Activated CD4-positive, alpha-beta memory T cell treated with anti-CD3 and anti-CD28 coated beads for 36 hours (primary cell): ENCODE measurements at regions of chr1 and their contacts with region 1.

Region 1: GRCh38 chr1:100459358-100460114 is 78.4 kb upstream of the GPR88 start:
- DNase-seq: peak; percentile 88
- H3K4me3 Mint-ChIP-seq: peak overlapping the region; percentile 17
- H3K27ac Mint-ChIP-seq: peak overlapping the region; percentile 73
- H3K4me1 Mint-ChIP-seq: peaks cover 58% of the 10 kb centered on the region
- H3K27me3 Mint-ChIP-seq: no peaks in the 10 kb centered on the region

Region 2: GRCh38 chr1:99969729-99970621 is 489.6 kb before region 1 on chr1 and contains the start of gene SLC35A3:
- CTCF ChIA-PET with region 1: interaction called, 7 read pairs
- POLR2A ChIA-PET with region 1: no interaction called
- intact Hi-C with region 1: loop called (anchors 10 kb)
- DNase-seq: peak; percentile 88
- H3K4me3 Mint-ChIP-seq: peak within 1 kb of the TSS; percentile 100
- H3K27ac Mint-ChIP-seq: peak within 1 kb of the TSS; percentile 88
- H3K4me1 Mint-ChIP-seq: peaks cover 18% of the 10 kb centered on the region
- H3K27me3 Mint-ChIP-seq: no peaks in the 10 kb centered on the region
- total RNA-seq, gene SLC35A3: 16.5 to 18.3 TPM

Region 3: DNA sequence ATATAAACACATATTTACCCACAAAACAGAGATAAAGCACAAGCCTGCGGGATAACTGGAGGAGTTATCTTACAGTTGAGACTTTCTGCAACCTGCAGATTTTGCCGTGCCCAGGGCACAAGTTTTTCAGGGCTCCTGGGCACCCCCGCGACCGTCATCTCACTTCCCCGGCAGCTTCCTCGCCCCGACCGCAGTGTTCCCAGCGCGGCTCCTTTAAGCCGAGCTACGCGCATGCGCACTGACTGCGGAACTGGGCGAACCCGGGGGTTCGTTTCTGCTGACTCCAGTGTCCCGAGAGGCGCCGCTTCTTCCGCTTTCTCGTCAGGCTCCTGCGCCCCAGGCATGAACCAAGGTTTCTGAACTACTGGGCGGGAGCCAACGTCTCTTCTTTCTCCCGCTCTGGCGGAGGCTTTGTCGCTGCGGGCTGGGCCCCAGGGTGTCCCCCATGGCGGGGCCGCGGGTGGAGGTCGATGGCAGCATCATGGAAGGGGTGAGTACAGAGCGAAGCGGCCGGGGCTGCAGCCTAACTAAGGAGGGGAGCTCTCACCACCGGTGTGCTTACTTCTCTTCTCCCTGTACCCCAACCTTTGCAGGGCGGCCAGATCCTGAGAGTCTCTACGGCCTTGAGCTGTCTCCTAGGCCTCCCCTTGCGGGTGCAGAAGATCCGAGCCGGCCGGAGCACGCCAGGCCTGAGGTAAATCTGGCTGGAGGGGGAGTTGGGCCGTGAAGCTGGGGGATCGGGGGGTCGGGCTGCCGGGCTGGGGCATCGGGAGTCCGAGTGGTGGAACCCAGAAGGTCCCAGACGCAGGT is 193.4 kb before region 1 on chr1 and contains the start of gene RTCA:
- CTCF ChIA-PET with region 1: interaction called, 25 read pairs
- POLR2A ChIA-PET with region 1: interaction called, 9 read pairs
- intact Hi-C with region 1: loop called (anchors 1 kb)
- DNase-seq: peak; percentile 96
- H3K4me3 Mint-ChIP-seq: peak within 1 kb of the TSS; percentile 100
- H3K27ac Mint-ChIP-seq: peak within 1 kb of the TSS; percentile 97
- H3K4me1 Mint-ChIP-seq: peaks cover 40% of the 10 kb centered on the region
- H3K27me3 Mint-ChIP-seq: no peaks in the 10 kb centered on the region
- total RNA-seq, gene RTCA: 56.6 to 58.2 TPM

Region 4: DNA sequence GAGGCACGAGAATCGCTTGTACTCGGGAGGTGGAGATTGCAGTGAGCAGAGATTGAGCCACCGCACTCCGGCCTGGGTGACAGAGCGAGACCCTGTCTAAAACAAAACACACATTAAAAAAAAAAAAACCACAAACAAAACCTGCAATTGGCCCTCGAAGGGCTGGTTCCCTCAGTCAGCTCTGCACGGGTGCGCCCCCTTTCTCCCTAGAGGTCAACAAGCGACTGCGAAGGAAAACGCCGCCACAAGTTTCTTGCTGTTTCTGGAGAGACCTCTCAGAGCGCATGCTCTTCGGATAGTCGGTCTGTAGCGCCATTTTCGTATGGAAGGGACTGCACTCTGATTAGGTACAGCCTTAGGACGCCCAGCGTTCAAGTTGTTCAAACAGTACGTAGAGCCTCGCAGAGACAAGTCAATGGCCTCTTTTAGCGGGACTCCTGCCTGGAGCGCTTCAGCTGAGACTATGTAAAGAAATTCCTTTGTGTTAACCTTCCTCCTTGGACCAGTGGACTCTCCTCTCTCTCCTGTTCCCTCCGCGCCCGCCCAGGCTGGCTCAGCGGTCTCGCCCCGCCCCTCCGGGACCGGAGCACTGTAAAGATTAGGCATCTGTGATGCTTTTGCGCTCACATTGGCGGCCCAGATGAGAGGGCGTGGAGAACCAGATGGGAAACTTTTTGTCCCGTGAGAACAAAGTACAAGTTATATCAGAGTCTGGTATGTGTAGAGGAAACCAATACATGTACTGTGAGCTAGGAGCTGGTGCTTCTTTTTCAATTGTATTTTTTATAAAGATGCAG is 108.2 kb before region 1 on chr1:
- CTCF ChIA-PET with region 1: interaction called, 54 read pairs
- POLR2A ChIA-PET with region 1: interaction called, 11 read pairs
- intact Hi-C with region 1: loop called (anchors 2 kb)
- DNase-seq: peak; percentile 94
- H3K4me3 Mint-ChIP-seq: peak overlapping the region; percentile 98
- H3K27ac Mint-ChIP-seq: peak overlapping the region; percentile 97
- H3K4me1 Mint-ChIP-seq: peaks cover 30% of the 10 kb centered on the region
- H3K27me3 Mint-ChIP-seq: no peaks in the 10 kb centered on the region

Region 5: DNA sequence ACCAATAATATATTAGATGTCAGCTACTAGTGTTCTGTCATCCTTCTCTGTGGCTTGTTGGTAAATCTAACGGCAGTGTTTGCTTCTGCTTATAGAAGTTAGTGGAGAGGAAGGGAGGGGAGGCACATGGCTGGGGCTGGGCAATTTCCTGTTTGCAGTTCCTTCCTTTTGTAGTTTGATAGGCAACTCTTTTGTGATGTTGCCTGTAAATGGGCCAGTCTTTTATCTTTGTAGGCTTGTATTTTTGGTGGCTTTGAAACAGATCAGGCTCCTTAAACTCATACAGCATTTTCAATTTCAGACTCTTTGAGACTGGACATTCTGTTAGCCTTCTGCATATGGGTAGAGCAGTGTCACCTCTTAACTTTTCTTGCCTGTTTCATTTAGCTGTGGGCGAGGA is 59.1 kb before region 1 on chr1:
- CTCF ChIA-PET with region 1: interaction called, 14 read pairs
- POLR2A ChIA-PET with region 1: no interaction called
- intact Hi-C with region 1: no loop called
- DNase-seq: peak; percentile 67
- H3K4me3 Mint-ChIP-seq: peak overlapping the region; percentile 53
- H3K27ac Mint-ChIP-seq: peak overlapping the region; percentile 91
- H3K4me1 Mint-ChIP-seq: peaks cover 83% of the 10 kb centered on the region
- H3K27me3 Mint-ChIP-seq: no peaks in the 10 kb centered on the region

Region 6: GRCh38 chr1:100433563-100433962 is 26.0 kb before region 1 on chr1:
- CTCF ChIA-PET with region 1: interaction called, 13 read pairs
- POLR2A ChIA-PET with region 1: no interaction called
- intact Hi-C with region 1: no loop called
- DNase-seq: no peak
- H3K4me3 Mint-ChIP-seq: no peak overlapping the region
- H3K27ac Mint-ChIP-seq: peak overlapping the region; percentile 5
- H3K4me1 Mint-ChIP-seq: peaks cover 75% of the 10 kb centered on the region
- H3K27me3 Mint-ChIP-seq: no peaks in the 10 kb centered on the region

Region 7: GRCh38 chr1:100543640-100544039 is 84.1 kb after region 1 on chr1:
- CTCF ChIA-PET with region 1: interaction called, 6 read pairs
- POLR2A ChIA-PET with region 1: no interaction called
- intact Hi-C with region 1: loop called (anchors 1 kb)
- DNase-seq: peak; percentile 63
- H3K4me3 Mint-ChIP-seq: no peak overlapping the region
- H3K27ac Mint-ChIP-seq: no peak overlapping the region
- H3K4me1 Mint-ChIP-seq: peaks cover 8% of the 10 kb centered on the region
- H3K27me3 Mint-ChIP-seq: peaks cover 20% of the 10 kb centered on the region